ENCODE measurements at regions of chr9 and their contacts with region 1.

Region 1: GRCh38 chr9:110256380-110257096 is at the start of gene TXN:
- DNase-seq: peak; percentile 83 to 97
- ATAC-seq: peak; percentile 81 to 82
- H3K4me3 ChIP-seq: peak within 1 kb of the TSS; percentile 67
- H3K27ac ChIP-seq: peak within 1 kb of the TSS; percentile 97
- H3K4me1 ChIP-seq: peaks cover 48% of the 10 kb centered on the region
- CTCF ChIP-seq: no peak
- EP300 ChIP-seq: peak; percentile 15 to 82; a peak in 1 of 5 replicates
- POLR2A ChIP-seq: peak; percentile 96
- RAD21 ChIP-seq: no peak
- polyA plus RNA-seq, gene TXN: 1,336 and 1,626 TPM in 2 replicates

Region 2: DNA sequence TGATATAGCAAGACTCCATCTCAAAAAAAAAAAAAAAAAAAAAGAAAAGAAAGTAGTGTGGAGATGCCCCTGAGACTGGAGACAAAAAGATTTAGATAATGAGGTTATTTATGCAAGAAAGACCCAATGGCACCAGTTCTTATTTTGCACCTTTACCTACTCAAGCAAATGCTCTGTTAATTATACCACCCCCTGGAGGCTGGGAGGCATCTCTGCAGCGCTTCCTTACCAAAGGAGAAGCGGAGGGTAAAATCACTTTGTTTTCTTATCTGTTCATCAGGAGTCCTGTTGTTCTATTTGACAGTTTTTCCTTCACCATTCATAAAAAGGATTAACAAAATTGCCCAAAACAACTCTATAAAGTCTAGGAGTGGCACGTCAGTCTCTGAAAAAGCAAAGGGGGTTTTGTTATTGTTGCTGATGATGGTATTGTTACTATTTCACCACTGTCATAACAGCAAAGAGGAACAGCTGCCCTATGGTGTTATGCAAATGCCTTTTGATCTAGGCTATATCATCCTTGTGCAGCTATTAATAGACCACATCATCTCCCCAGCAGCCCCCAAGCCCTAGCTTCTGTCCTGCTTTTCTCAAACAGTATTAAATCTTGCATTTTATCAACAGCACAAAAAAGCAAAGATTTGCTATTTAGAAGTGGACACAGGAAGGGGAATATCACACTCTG is 302.6 kb before region 1 on chr9:
- CTCF ChIA-PET with region 1: no interaction called
- POLR2A ChIA-PET with region 1: no interaction called
- DNase-seq: peak in 1 of 2 experiments; percentile 4
- ATAC-seq: no peak
- H3K4me3 ChIP-seq: no peak overlapping the region
- H3K27ac ChIP-seq: no peak overlapping the region
- H3K4me1 ChIP-seq: no peaks in the 10 kb centered on the region
- CTCF ChIP-seq: no peak
- EP300 ChIP-seq: no peak
- POLR2A ChIP-seq: no peak
- RAD21 ChIP-seq: no peak

Region 3: DNA sequence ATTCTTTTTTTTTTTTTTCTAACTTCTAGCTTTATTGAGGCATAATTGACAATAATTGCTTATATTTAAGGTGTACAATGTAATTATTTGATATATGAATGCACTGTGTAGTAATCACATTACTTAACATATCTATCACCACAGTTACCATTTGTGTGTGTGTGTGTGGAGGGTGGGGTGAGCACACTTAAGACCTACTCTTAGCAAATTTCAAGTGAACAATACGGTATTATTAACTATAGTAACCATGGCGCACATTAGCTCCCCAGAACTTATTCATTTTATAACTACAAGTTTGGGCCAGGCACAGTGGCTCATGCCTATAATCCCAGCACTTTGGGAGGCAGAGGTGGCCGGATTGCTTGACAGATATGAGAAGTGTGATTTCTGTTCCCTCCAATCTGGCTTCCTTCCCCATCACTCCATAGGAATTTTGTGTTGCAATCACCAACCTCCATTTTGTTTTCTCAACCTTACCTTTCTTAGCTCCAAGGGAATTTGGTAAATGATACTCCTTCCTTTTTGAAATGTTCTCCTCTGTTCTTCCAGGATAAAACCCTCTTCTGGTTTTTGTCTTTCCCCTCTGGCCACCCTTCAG is 15.2 kb before region 1 on chr9:
- CTCF ChIA-PET with region 1: interaction called, 3 read pairs
- POLR2A ChIA-PET with region 1: interaction called, 30 read pairs
- DNase-seq: peak in 1 of 2 experiments; percentile 33
- ATAC-seq: peak; percentile 43 to 45
- H3K4me3 ChIP-seq: no peak overlapping the region
- H3K27ac ChIP-seq: no peak overlapping the region
- H3K4me1 ChIP-seq: peaks cover 6% of the 10 kb centered on the region
- CTCF ChIP-seq: no peak
- EP300 ChIP-seq: no peak
- POLR2A ChIP-seq: no peak
- RAD21 ChIP-seq: no peak

Region 4: DNA sequence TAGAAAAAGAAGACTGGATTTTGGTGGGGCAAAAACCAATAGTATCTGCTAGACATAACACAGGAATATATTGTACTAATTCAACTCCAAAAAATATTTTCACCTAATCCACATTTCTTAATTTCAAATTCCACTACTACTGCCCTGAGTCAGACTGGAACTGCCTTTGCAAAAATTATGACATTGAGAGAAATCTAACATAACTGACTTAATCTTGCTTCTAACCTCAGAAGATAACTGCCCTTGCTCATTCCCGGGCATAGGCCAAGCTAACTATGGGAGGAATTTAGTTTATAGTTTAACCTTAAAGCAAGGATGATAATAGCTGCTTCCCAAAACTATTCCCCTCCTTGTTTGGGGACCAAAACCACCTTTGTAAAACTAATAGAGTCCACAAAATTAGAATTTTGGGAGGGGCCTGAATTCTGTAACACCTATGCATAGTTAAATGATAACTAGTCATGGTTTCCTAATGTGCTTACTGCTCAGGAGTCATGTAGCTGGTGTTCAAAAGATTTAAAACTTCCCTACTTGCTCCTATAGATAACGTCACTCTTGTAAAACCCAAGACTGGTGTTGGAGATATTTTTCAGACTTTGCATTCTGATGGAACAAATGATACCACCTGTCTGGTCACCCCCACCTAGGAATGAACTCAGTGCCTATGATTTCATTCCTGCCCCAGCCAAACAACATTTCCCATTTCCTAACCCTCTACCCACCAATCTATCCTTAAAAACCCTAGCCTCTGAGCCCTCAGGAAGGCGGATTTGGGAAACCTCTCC is 13.9 kb after region 1 on chr9:
- CTCF ChIA-PET with region 1: interaction called, 7 read pairs
- POLR2A ChIA-PET with region 1: interaction called, 12 read pairs
- DNase-seq: no peak
- ATAC-seq: no peak
- H3K4me3 ChIP-seq: no peak overlapping the region
- H3K27ac ChIP-seq: no peak overlapping the region
- H3K4me1 ChIP-seq: no peaks in the 10 kb centered on the region
- CTCF ChIP-seq: no peak
- EP300 ChIP-seq: no peak
- POLR2A ChIP-seq: no peak
- RAD21 ChIP-seq: no peak

Region 5: DNA sequence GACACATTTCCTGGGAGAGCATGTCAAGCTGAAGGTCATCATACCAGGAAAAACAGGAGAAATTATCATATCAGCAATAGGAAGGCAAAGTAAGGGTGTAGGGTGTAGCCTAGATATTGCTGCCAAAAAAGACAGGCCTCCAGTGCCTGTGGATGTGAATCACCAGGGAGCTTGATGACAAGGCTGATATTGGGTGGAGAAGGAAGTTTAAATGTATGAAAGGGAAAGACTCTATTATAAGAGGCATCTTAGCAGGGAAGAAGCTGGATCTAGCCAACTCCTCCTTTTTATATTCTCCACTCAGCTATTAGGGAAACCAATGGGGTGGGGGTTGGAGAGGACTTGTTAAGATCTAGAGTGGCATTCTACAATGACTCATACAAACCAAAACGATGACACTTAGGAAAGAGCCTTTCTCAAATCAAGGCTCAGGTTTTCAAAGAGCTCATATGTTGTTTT is 94.5 kb after region 1 on chr9:
- CTCF ChIA-PET with region 1: no interaction called
- POLR2A ChIA-PET with region 1: interaction called, 12 read pairs
- DNase-seq: peak; percentile 16 to 43
- ATAC-seq: peak; percentile 71 to 76
- H3K4me3 ChIP-seq: no peak overlapping the region
- H3K27ac ChIP-seq: peak overlapping the region in 1 of 2 experiments; percentile 0; a peak in 1 of 6 replicates
- H3K4me1 ChIP-seq: peaks cover 11% of the 10 kb centered on the region; the same call in 2 of the 3 replicates
- CTCF ChIP-seq: no peak
- EP300 ChIP-seq: no peak
- POLR2A ChIP-seq: no peak
- RAD21 ChIP-seq: no peak